Pancreas (tissue), 10 donors: ENCODE measurements at regions of chr21 and their contacts with region 1.

Region 1: DNA sequence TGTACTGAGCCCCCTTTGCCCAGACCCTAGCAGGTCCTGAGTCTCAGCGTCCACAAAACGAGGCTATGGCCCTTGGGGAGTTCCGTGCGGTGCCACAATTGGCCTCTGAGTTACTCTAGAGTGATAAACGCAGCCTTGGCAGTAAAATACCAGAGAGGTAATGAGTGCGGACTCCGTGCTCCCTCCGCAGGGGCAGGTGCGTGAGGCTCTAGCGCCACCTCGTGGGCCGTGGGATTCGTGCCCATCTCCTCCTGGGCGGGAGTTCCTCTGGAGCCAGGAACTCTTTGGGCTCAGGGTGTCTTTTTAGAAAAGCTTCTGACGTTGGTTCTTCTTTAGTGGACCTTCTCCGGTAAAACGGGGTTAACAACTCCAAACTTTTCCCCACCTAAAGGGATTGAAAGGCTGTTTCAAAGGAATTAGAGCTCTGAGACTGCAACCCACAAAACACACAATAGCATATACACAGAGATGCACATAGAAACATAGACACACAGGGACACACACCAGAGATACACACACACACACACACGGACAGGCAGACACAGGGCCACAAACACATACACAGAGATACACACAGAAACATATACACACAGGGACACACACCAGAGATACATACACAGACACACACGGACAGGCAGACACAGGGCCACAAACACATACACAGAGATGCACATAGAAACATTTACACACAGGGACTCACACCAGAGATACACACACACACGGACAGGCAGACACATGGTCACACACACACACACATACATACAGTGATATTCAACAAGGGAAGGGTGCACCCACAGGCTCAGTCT is 99.4 kb downstream of the KCNJ15 start:
- DNase-seq: peak; percentile 59 to 94 (median 84)
- ATAC-seq: peak; percentile 92 to 94 (median 93)
- H3K4me3 ChIP-seq: no peak overlapping the region
- H3K27ac ChIP-seq: no peak overlapping the region
- H3K4me1 ChIP-seq: peaks cover 0 to 8% (median 0%) of the 10 kb centered on the region in 3 donors
- H3K27me3 ChIP-seq: no peaks in the 10 kb centered on the region
- CTCF ChIP-seq: peak; percentile 81 to 92 (median 90)

Region 2: DNA sequence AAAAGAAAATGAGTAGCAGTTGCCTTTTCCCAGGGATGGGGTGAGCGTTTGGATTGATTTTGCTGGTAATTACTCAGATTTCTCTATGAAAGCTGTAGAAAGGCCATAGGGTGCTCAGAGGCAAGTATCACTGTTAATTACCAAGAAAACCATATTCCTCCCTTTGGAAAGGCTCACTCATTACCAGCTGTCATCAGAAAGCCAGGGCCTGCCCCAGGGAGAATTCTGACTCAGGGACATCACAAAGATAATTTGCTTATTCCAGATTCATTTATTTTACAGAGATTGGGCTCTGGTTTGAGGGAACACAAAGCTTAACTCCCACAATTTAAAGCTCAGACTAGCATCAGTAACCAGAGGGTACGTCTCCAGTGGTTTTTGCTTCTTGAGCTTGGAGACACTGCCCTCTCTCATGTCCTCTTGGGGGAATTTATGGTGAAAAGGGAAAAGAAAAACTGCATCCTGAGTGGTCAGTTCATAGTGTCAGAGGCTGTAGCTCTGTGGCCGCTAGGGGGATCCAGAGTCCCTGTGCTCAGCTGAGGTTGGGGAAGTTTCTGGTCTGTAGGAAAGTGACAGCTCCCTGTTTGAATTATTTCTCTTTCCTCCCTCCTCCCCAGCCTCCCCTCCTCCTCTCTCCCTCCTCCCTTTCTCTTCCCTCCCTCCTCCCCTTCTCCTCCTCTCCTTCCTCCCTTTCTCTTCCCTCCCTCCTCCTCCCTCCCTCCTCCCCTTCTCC is 644.2 kb before region 1 on chr21:
- intact Hi-C with region 1: loop called in 1 of 3 experiments (anchors 10 kb)
- DNase-seq: peak in 5 of 6 donors; percentile 39 to 79 (median 57)
- ATAC-seq: peak; percentile 61 to 95 (median 95)
- H3K4me3 ChIP-seq: no peak overlapping the region
- H3K27ac ChIP-seq: no peak overlapping the region
- H3K4me1 ChIP-seq: no peaks in the 10 kb centered on the region
- H3K27me3 ChIP-seq: peaks cover 0 to 3% (median 0%) of the 10 kb centered on the region in 4 donors
- CTCF ChIP-seq: peak; percentile 68 to 84 (median 74)

Region 3: DNA sequence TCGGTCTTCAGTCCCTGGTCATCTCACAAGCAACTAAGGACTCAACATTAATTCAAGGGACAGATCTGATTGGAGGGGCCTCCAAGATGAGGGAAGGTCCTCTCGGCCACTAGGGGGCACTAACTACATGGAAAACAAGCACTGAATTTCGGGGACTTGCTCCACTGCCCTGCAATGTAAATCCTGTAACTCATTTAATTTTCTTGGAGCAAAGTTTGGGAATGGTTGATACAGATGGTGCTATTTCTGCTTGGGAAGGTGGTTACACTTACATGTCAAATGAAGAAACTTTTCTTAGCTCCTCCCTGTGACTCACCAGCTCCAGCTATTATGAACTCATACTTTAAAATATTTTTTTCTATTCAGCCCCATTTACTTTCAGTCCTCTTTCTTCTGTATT is 196.8 kb before region 1 on chr21:
- intact Hi-C with region 1: loop called in 2 of 3 experiments (anchors 5 kb)
- DNase-seq: peak in 5 of 6 donors; percentile 47 to 71 (median 63)
- ATAC-seq: peak in 3 of 4 donors; percentile 84 to 95 (median 85)
- H3K4me3 ChIP-seq: no peak overlapping the region
- H3K27ac ChIP-seq: no peak overlapping the region
- H3K4me1 ChIP-seq: no peaks in the 10 kb centered on the region
- H3K27me3 ChIP-seq: peaks cover 0 to 4% (median 0%) of the 10 kb centered on the region in 4 donors
- CTCF ChIP-seq: peak; percentile 74 to 80 (median 76)

Region 4: DNA sequence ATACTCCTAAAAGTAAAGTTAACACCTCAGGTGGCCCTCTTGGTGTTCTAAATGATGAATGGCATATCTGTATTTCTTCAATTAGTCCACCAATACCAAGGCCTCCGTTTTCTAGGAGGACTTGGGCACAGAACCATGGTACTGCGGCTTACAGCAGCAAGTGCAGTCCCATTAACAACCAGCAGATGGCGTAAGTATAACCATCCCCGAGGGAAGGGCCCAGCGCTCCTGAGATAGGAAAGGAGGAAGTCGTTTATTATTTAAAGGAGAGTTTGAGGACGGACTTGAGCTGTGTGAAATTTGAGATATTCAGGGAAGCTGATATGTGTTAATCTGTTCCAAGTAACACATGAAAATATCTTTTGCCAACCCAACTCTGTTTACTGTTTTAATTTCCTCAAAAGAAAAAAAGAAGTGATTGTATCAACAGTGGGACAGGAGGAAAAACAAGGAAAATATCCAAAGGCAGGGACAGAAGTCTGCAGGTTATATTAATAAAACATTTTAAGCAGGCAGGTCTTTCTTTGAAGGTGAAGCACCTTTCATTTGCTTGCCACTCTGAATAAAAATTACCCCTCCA is 137.1 kb before region 1 on chr21:
- intact Hi-C with region 1: loop called in 2 of 3 experiments (anchors 5 to 10 kb)
- DNase-seq: peak; percentile 62 to 77 (median 70)
- ATAC-seq: peak; percentile 93 to 99 (median 97)
- H3K4me3 ChIP-seq: no peak overlapping the region
- H3K27ac ChIP-seq: peak overlapping the region in 2 of 4 donors; percentile 62 to 64
- H3K4me1 ChIP-seq: peaks cover 4 to 11% (median 5%) of the 10 kb centered on the region in 3 donors
- H3K27me3 ChIP-seq: no peaks in the 10 kb centered on the region
- CTCF ChIP-seq: peak; percentile 92 to 98 (median 96)